ENCODE measurements at regions of chr9 and their contacts with region 1.

Region 1: GRCh38 chr9:89179895-89180667 is 1.5 kb upstream of the SHC3 start:
- DNase-seq: peak; percentile 91 to 96
- H3K4me3 ChIP-seq: peak overlapping the region; percentile 35 to 42 (median 38)
- H3K27ac ChIP-seq: peak overlapping the region; percentile 57 to 82 (median 78)
- H3K4me1 ChIP-seq: peaks cover 33 to 43% (median 37%) of the 10 kb centered on the region in 4 donors
- H3K27me3 ChIP-seq: peaks cover 20 to 49% (median 32%) of the 10 kb centered on the region in 3 donors
- CTCF ChIP-seq: no peak
- EP300 ChIP-seq: no peak
- POLR2A ChIP-seq: peak in 1 of 4 donors; percentile 18

Region 2: DNA sequence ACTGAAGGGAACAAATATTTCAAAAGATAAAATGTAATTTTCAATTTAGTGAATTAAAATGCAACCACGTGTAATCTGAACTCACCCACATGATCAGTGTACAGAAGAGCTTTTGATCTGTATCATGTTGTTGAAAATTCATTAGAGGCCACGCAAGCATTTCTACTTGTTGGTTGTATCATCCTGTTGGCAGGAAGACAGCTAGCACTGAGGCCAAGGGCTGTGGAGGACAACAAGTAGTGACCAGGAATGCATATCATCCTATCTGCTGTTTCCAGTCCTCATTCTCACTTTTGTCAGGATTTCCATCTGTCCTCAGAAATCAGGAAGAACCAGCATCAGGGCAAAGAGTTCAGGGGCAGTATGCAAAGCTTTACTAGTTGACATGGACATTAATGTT is 101.0 kb after region 1 on chr9:
- intact Hi-C with region 1: loop called (anchors 10 kb)
- DNase-seq: no peak
- H3K4me3 ChIP-seq: no peak overlapping the region
- H3K27ac ChIP-seq: no peak overlapping the region
- H3K4me1 ChIP-seq: peaks cover 0 to 19% (median 7%) of the 10 kb centered on the region in 4 donors
- H3K27me3 ChIP-seq: no peaks in the 10 kb centered on the region
- CTCF ChIP-seq: no peak
- EP300 ChIP-seq: no peak
- POLR2A ChIP-seq: no peak

Measured in stomach (tissue), 19 donors.